Uterus (tissue), 4 donors: ENCODE measurements at regions of chr2 and their contacts with region 1.

Region 1: DNA sequence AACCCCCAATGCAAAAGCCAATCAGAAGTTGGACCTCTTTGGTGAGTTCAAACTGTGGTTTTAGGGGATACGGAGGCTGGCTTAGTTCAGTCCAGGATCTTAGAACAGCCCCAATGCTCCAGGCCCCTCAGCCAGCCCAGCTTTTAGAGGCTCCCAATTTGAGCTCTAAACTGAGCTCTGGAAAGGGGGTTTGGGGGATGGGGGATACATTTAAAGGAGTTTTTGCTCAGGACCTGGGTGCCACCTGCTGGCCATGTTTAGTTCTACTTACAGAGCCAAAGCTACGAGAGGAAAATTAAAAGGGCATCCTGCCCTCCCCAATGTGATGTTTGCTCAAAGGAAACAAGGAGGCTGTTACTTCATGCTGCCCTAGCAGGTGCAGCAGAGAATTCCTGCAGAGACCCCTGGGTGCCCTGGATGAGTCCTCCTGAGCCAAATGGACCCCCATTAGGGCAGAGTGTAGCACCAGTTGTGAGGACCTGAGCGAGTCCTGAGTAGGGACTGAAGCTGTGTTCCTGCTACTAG is 15.9 kb upstream of the TMEM214 start:
- DNase-seq: peak; percentile 49 to 59
- H3K4me3 ChIP-seq: no peak overlapping the region
- H3K27ac ChIP-seq: peak overlapping the region in 1 of 2 donors; percentile 10
- H3K4me1 ChIP-seq: peaks cover 10 to 16% of the 10 kb centered on the region in 2 donors
- H3K27me3 ChIP-seq: no peaks in the 10 kb centered on the region
- CTCF ChIP-seq: peak; percentile 51 to 69 (median 64)
- POLR2A ChIP-seq: no peak

Region 2: DNA sequence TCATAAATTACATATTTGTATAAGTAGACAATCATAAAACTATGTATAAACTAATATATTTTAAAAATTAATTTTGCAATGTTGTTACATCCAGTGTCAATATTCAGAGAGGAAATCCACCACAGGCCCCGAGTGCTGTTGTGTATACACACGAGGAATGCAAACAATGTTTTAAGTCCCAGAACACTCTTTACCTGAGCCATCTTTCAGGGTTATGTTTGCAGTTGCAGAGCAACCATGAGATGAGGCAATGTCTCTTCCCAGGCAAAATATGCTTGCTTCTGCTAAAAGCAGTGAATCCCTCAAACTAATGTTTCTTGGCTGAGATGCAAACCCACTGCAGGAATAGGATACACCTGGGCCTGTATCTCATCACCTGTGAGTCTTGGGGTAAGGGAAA is 1229.8 kb before region 1 on chr2:
- intact Hi-C with region 1: no loop called
- DNase-seq: no peak
- H3K4me3 ChIP-seq: no peak overlapping the region
- H3K27ac ChIP-seq: no peak overlapping the region
- H3K4me1 ChIP-seq: no peaks in the 10 kb centered on the region
- H3K27me3 ChIP-seq: no peaks in the 10 kb centered on the region
- CTCF ChIP-seq: no peak
- POLR2A ChIP-seq: no peak

Region 3: DNA sequence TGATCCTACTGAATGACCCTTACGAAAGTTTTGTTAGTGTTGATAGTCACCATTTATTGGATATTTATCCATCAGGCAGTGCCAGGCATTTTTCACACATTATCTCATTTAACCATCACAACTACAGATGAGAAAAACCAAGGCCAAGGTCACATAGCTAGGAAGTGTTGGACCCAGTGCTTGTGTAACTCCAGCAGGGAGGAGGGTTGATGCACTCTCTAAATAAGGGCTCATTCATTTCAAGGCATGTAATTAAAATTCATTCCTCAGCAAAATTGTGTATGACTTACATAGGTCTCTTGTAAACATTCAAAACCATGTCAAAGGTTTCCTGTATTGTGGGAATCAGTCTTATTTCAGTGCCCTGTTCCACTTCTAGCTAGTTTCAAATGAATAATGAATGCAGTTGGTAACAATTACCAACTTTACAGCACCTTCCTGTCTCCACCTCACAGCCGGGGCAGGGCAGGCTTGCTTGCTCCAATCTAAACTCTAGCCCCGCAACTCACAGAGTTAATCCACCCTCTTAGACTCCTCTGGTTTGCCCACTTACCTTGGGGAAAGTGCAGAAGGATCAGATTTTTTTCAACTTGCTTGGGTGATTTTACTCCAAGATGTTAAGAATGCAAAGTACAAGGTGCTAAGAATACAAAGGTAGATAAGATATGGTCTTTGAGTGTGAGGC is 52.3 kb before region 1 on chr2:
- intact Hi-C with region 1: loop called (anchors 5 kb)
- DNase-seq: no peak
- H3K4me3 ChIP-seq: no peak overlapping the region
- H3K27ac ChIP-seq: no peak overlapping the region
- H3K4me1 ChIP-seq: no peaks in the 10 kb centered on the region
- H3K27me3 ChIP-seq: no peaks in the 10 kb centered on the region
- CTCF ChIP-seq: no peak
- POLR2A ChIP-seq: no peak

Region 4: DNA sequence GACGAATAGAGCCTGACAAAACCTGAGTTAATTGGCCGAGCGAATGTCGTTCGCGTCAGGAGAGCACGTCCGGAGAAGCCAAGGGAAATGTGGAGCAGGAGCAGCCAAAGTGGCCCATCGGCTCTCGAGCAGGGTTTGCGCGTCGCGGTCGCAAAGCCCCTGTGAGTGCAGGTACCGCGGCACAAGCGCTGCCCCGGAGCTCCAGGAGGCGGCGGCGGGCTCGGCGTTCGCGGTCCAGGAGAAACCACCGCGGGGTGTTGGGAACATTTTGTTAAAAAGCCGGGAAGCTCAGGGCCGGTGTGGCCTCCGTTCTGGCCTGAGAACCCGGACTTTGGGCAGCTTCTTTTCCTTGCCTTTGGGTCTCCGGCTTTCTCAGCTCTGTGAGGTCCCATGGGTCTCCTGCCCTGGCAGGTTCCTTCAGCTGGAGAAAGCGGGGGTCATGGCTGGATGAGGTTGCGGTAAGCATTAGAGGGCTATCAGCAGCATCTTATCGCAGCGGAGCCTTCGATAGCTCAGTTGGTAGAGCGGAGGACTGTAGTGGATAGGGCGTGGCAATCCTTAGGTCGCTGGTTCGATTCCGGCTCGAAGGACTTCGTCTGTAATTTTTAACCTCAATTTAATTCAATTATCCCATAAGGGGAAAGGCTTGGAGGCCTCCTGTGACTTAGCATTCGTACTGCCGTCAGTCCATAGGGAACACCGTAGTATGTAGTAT is 33.6 kb after region 1 on chr2:
- intact Hi-C with region 1: no loop called
- DNase-seq: peak; percentile 95 to 96
- H3K4me3 ChIP-seq: peak overlapping the region; percentile 75 to 96
- H3K27ac ChIP-seq: peak overlapping the region; percentile 94 to 100
- H3K4me1 ChIP-seq: peaks cover 0 to 3% of the 10 kb centered on the region in 2 donors
- H3K27me3 ChIP-seq: no peaks in the 10 kb centered on the region
- CTCF ChIP-seq: peak; percentile 26 to 73 (median 60)
- POLR2A ChIP-seq: peak in 1 of 2 donors; percentile 11

Region 5: DNA sequence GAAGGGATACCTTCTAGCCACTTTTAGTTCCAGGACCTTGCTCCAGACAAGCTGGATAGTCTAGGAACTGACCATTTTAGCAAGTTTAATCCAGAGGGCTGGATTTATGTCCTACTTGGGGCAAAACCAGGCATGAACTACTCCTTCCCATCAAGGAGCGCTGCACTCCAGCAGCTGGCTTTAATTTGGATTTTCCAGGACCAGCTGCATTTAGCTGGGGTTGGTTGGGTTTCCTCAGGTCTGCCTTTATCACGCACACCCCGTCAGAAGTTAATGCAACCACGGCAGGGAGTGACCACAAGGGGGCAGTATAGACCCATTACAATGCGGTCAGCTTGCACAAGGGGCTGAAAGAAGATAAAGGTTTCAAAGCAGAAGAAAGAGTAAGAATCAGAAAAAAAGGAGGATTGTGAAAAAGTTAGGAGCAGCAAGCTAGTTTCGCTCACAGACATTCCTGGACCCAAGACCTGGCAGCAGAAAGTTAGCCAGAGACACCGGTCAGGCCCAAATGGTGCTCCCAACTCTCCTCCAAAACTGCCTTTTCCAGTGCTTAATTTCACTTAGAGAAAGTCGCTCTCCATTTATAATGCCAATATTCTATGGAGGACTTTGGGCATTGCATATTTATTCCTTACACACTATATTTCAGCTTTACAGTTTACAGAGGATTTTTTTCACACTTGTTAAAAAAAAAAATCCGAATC is 686.9 kb after region 1 on chr2:
- intact Hi-C with region 1: no loop called
- DNase-seq: peak; percentile 87 to 90
- H3K4me3 ChIP-seq: no peak overlapping the region
- H3K27ac ChIP-seq: peak overlapping the region; percentile 49 to 91
- H3K4me1 ChIP-seq: no peaks in the 10 kb centered on the region
- H3K27me3 ChIP-seq: no peaks in the 10 kb centered on the region
- CTCF ChIP-seq: peak; percentile 89 to 95 (median 90)
- POLR2A ChIP-seq: no peak